ENCODE measurements at regions of chr4 and their contacts with region 1.

Region 1: GRCh38 chr4:185591679-185592141 is 56.4 kb upstream of the PDLIM3 start:
- DNase-seq: no peak
- ATAC-seq: no peak
- H3K4me3 ChIP-seq: no peak overlapping the region
- H3K27ac ChIP-seq: no peak overlapping the region
- H3K4me1 ChIP-seq: peaks cover 0 to 3% of the 10 kb centered on the region in 2 experiments; a peak in 2 of 5 replicates
- H3K27me3 ChIP-seq: peaks cover 24 to 41% of the 10 kb centered on the region in 2 experiments
- CTCF ChIP-seq: no peak
- EP300 ChIP-seq: no peak
- POLR2A ChIP-seq: no peak
- RAD21 ChIP-seq: no peak

Region 2: DNA sequence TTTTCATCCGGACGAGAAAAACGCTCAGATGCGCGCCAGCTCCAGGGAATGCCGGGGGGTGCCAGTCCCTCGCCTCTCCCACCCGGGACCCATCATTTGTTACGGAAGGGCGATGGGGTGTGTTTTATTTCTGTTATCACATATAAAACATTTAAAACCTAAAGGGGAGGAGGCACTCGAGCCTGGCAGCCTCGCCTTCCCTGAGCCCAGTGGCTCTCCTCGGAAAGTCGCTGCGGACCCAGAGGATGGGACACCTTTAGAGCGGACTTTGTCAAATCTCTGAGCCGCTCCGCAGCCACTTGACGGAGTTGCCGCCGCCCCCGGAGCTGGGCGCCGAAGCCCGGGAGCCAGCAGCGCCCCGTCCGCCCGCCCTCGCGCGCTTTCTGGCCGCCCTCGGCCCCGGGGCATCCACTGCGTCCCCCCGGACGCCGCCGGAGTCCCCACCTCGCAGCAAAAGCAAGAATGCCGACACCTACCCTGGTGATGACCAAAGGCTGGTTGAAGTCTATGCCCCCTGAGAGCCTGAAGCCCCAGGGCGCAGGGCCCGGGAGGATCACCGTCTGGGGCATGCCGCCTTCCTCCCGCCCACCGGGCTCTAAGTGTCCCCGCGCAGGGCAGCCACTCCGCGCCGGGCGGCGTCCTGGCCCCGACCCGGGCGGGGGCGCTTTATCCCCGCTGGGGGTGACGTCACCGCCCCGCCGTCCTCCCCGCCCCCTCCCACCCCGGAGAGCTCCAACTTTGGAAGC is 56.7 kb before region 1 on chr4 and contains the start of gene PDLIM3:
- CTCF ChIA-PET with region 1: no interaction called
- POLR2A ChIA-PET with region 1: no interaction called
- in situ Hi-C with region 1: no loop called
- intact Hi-C with region 1: loop called (anchors 5 kb)
- DNase-seq: peak; percentile 51 to 77 (median 72)
- ATAC-seq: peak; percentile 91
- H3K4me3 ChIP-seq: peak within 1 kb of the TSS; percentile 22; the same call in 1 of the 2 replicates
- H3K27ac ChIP-seq: no peak within 1 kb of the TSS
- H3K4me1 ChIP-seq: peaks cover 0 to 11% of the 10 kb centered on the region in 2 experiments; a peak in 3 of 5 replicates
- H3K27me3 ChIP-seq: peaks cover 40 to 43% of the 10 kb centered on the region in 2 experiments
- CTCF ChIP-seq: no peak
- EP300 ChIP-seq: no peak
- POLR2A ChIP-seq: no peak
- RAD21 ChIP-seq: no peak
- polyA plus RNA-seq, gene PDLIM3: 0.06 TPM in 1 of 2 experiments, not detected in the other

Region 3: DNA sequence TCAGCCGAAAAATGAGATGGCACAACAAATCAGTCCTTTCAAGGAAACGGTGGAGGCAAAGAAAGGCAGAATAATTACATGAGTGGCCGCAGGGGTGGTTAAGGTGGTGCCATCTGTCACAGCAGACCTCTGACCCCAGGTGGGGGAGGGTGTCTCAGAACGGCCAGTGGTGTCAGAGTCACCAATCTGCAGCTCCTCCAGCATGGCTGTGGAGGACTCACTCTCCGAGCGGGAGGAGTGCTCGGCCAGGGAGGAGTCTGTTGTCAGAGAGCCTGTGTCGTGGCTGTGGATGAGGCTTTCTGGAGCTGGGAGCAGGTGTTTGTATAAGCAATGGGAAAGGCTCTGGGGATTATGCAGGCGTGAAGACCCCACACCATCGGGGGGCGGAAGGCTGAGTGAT is 73.9 kb after region 1 on chr4:
- CTCF ChIA-PET with region 1: no interaction called
- POLR2A ChIA-PET with region 1: no interaction called
- in situ Hi-C with region 1: no loop called
- intact Hi-C with region 1: no loop called
- DNase-seq: no peak
- ATAC-seq: no peak
- H3K4me3 ChIP-seq: no peak overlapping the region
- H3K27ac ChIP-seq: no peak overlapping the region
- H3K4me1 ChIP-seq: no peaks in the 10 kb centered on the region
- H3K27me3 ChIP-seq: peaks cover 5 to 29% of the 10 kb centered on the region in 2 experiments; a peak in 4 of 5 replicates
- CTCF ChIP-seq: no peak
- EP300 ChIP-seq: no peak
- POLR2A ChIP-seq: no peak
- RAD21 ChIP-seq: no peak

Region 4: DNA sequence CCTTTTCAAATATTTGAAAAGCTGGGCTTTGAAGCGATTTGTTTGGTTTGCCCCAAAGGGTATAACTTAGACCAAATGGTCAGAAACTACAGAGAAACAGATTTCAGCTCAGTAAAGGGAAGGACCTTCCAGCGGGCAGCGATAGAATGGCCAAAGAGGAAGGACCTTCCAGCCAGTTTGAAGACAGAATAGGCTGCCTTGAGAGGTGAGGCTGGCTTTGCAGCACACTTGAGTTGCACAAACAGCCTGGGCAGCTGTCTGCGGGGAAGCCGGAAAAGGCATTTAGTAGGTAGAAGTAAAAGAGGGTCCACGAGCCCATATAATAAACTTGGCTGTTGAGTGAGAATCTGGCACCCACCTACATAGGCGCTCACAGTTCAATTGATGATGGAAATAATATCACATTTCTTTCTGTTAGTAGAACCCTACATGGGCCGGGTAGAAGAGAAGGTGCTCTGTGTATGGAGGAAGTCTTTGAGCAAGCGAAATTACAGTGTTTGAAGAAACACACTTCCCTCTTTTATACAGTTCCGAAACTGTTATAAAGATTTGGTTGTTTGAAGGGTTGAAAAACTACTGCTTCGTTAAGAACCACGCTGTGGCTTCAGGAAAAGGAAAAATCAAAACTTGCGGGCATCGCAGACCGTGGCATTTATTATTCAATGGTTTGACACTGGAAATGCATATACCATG is 295.3 kb after region 1 on chr4:
- CTCF ChIA-PET with region 1: no interaction called
- POLR2A ChIA-PET with region 1: no interaction called
- in situ Hi-C with region 1: no loop called
- intact Hi-C with region 1: no loop called
- DNase-seq: no peak
- ATAC-seq: no peak
- H3K4me3 ChIP-seq: no peak overlapping the region
- H3K27ac ChIP-seq: no peak overlapping the region
- H3K4me1 ChIP-seq: no peaks in the 10 kb centered on the region
- H3K27me3 ChIP-seq: peaks cover 0 to 4% of the 10 kb centered on the region in 2 experiments; a peak in 4 of 5 replicates
- CTCF ChIP-seq: no peak
- EP300 ChIP-seq: no peak
- POLR2A ChIP-seq: no peak
- RAD21 ChIP-seq: no peak

Measured in K562 (cell line).